HepG2 (cell line): ENCODE measurements at regions of chr7 and their contacts with region 1.

Region 1: GRCh38 chr7:78020136-78020873 is 221.7 kb downstream of the PHTF2 start:
- DNase-seq: peak; percentile 51
- ATAC-seq: peak; percentile 87
- H3K4me3 ChIP-seq: peak overlapping the region in 2 of 3 experiments; percentile 59 to 73; a peak in 3 of 6 replicates
- H3K27ac ChIP-seq: no peak overlapping the region
- H3K4me1 ChIP-seq: peaks cover 5% of the 10 kb centered on the region; the same call in 1 of the 2 replicates
- H3K27me3 ChIP-seq: peaks cover 0 to 3% of the 10 kb centered on the region in 2 experiments; a peak in 2 of 5 replicates
- CTCF ChIP-seq: peak; percentile 77
- EP300 ChIP-seq: no peak
- POLR2A ChIP-seq: no peak
- RAD21 ChIP-seq: peak; percentile 23; the same call in 1 of the 2 replicates

Region 2: DNA sequence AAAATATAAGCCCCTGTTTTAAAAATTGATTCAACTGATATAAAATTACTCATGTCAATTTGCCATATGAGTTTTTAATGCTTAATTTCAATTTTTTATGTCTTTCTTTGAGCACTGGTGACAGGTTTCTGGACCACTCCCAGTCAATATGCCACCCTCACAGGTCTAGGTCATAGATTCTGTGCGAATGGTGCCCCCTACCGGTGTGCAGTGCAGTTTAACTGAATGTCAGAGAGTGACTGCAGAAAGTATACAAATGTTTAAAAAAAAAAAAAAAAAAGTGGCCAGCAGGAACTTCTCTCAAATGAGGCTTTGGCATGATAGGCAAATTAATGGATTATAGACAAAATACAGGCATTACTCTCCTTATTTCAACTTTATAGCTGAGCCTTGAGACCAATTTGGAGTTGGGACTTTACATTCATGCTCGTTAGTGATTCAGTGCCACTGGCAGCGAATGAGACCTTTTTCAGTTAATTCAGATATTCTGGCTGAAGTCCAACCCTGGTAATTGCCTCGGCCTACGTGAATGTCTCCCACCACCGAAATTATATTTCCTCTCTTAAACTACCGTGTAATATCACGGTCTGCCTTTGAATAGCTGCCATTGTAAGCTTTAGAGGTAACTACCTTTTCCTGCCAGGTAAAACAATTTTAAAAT is 205.9 kb after region 1 on chr7:
- CTCF ChIA-PET with region 1: interaction called, 5 read pairs
- POLR2A ChIA-PET with region 1: no interaction called
- in situ Hi-C with region 1: no loop called
- intact Hi-C with region 1: loop called (anchors 2 kb)
- DNase-seq: peak; percentile 16
- ATAC-seq: peak; percentile 74
- H3K4me3 ChIP-seq: no peak overlapping the region
- H3K27ac ChIP-seq: no peak overlapping the region
- H3K4me1 ChIP-seq: no peaks in the 10 kb centered on the region
- H3K27me3 ChIP-seq: no peaks in the 10 kb centered on the region
- CTCF ChIP-seq: peak; percentile 69
- EP300 ChIP-seq: no peak
- POLR2A ChIP-seq: no peak
- RAD21 ChIP-seq: no peak

Region 3: GRCh38 chr7:78434281-78434680 is 414.0 kb after region 1 on chr7:
- CTCF ChIA-PET with region 1: interaction called, 5 read pairs
- POLR2A ChIA-PET with region 1: no interaction called
- in situ Hi-C with region 1: no loop called
- intact Hi-C with region 1: loop called (anchors 1 kb)
- DNase-seq: no peak
- ATAC-seq: peak; percentile 40; the same call in 1 of the 3 replicates
- H3K4me3 ChIP-seq: no peak overlapping the region
- H3K27ac ChIP-seq: no peak overlapping the region
- H3K4me1 ChIP-seq: peaks cover 8% of the 10 kb centered on the region; the same call in 1 of the 2 replicates
- H3K27me3 ChIP-seq: no peaks in the 10 kb centered on the region
- CTCF ChIP-seq: peak; percentile 10; the same call in 1 of the 2 replicates
- EP300 ChIP-seq: no peak
- POLR2A ChIP-seq: no peak
- RAD21 ChIP-seq: no peak

Region 4: DNA sequence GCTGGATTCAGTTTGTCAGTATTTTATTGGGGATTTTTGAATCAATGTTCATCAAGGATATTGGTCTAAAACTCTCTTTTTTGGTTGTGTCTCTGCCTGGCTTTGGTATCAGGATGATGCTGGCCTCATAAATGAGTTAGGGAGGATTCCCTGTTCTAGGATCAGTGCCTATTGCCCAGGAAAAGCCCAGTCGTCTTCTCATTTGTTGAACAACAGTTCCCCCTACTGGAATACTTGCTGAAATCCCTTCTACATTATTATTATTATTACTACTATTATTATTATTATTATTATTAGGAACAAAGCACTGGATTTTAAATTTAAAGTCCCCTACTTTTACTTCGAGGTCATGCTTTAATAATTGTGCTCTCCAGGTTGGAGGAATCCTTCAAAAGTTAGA is 904.3 kb after region 1 on chr7:
- CTCF ChIA-PET with region 1: no interaction called
- POLR2A ChIA-PET with region 1: no interaction called
- in situ Hi-C with region 1: no loop called
- intact Hi-C with region 1: loop called (anchors 10 kb)
- DNase-seq: no peak
- ATAC-seq: no peak
- H3K4me3 ChIP-seq: no peak overlapping the region
- H3K27ac ChIP-seq: no peak overlapping the region
- H3K4me1 ChIP-seq: no peaks in the 10 kb centered on the region
- H3K27me3 ChIP-seq: no peaks in the 10 kb centered on the region
- CTCF ChIP-seq: peak; percentile 27; the same call in 1 of the 2 replicates
- EP300 ChIP-seq: no peak
- POLR2A ChIP-seq: no peak
- RAD21 ChIP-seq: no peak